ENCODE measurements at regions of chr20 and their contacts with region 1.

Region 1: DNA sequence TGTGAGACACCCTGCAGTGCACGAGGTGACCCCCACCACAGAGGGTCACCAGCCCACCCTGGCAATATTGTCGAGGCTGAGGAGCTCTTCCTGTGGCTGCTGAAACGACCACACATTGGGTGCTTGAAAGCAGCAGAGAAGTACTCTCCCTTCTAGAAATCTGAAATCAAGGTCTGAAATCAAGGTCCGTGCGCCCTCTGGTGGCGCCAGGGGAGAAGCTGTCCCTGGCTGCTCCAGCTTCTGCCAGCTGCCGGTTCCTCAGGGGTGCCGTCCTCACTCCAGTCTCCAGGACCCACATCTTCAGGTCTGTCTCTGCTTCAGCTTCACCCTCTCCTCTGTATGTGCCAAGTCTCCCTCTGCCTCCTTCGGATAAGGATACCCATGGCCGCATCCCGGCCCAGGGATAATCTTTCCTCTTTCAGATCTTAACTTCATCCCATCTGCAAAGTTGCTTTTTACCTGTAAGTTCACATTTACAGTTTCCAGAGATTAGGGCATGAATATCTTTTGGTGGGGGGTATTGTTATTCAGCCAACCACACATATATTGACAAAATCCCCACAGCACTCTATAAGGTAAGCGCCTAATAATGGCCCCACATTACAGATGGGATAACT is 108.3 kb upstream of the PHACTR3 start:
- DNase-seq: peak; percentile 41 to 71 (median 61)
- ATAC-seq: peak; percentile 77
- H3K4me3 ChIP-seq: no peak overlapping the region
- H3K4me3 Mint-ChIP-seq: no peak overlapping the region
- H3K27ac ChIP-seq: no peak overlapping the region
- H3K27ac Mint-ChIP-seq: no peak overlapping the region
- H3K4me1 ChIP-seq: no peaks in the 10 kb centered on the region
- H3K4me1 Mint-ChIP-seq: no peaks in the 10 kb centered on the region
- H3K27me3 ChIP-seq: no peaks in the 10 kb centered on the region
- H3K27me3 Mint-ChIP-seq: peaks cover 17 to 32% (median 25%) of the 10 kb centered on the region in 5 donors

Region 2: DNA sequence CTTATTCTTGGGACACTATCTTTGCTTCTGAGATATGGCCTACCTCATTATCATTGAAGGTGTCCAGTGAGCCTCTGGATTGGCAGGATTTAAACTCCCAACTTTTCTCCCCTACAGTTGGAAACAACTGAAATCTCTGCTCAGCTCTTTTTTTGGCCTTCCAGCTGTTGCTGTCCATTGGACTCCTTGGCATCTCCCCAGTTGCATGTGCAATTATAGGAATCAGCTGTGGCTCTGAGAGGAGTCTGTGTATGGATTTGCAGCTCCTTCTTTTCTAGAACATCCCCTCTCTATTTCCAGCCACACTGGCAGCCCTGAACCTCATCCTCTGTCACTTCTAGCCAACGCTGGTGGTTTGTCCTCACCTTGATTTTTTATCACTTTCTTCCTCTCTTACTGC is 1165.3 kb before region 1 on chr20:
- CTCF ChIA-PET with region 1: no interaction called
- POLR2A ChIA-PET with region 1: no interaction called
- intact Hi-C with region 1: no loop called
- DNase-seq: no peak
- ATAC-seq: no peak
- H3K4me3 ChIP-seq: no peak overlapping the region
- H3K4me3 Mint-ChIP-seq: no peak overlapping the region
- H3K27ac ChIP-seq: no peak overlapping the region
- H3K27ac Mint-ChIP-seq: peak overlapping the region in 1 of 9 donors; percentile 46
- H3K4me1 ChIP-seq: no peaks in the 10 kb centered on the region
- H3K4me1 Mint-ChIP-seq: peaks cover 17 to 68% (median 65%) of the 10 kb centered on the region in 7 donors
- H3K27me3 ChIP-seq: no peaks in the 10 kb centered on the region
- H3K27me3 Mint-ChIP-seq: no peaks in the 10 kb centered on the region

Region 3: DNA sequence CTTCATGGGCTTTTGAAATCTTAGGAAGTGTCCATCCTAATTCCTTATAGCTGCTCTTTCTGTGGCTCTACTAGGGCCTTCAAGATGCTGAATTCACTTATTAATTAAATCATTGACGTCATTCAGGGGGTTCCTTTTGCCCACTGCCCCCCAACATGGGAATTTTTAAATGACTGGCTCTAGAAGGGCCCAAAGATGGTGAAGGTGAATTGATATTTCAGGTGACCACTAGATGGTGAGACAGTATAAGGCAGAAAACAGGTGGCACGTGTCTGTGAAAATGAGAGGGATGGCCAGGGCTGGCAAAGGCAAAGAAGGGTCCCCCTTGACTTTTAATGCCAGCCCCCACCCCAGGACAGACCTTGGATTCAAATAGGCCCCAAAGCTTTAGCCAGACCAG is 631.7 kb before region 1 on chr20:
- CTCF ChIA-PET with region 1: interaction called, 10 read pairs
- POLR2A ChIA-PET with region 1: no interaction called
- intact Hi-C with region 1: loop called in 1 of 2 experiments (anchors 2 kb)
- DNase-seq: peak in 2 of 9 donors; percentile 37 to 39
- ATAC-seq: peak; percentile 45
- H3K4me3 ChIP-seq: no peak overlapping the region
- H3K4me3 Mint-ChIP-seq: no peak overlapping the region
- H3K27ac ChIP-seq: no peak overlapping the region
- H3K27ac Mint-ChIP-seq: no peak overlapping the region
- H3K4me1 ChIP-seq: no peaks in the 10 kb centered on the region
- H3K4me1 Mint-ChIP-seq: no peaks in the 10 kb centered on the region
- H3K27me3 ChIP-seq: peaks cover 0 to 3% of the 10 kb centered on the region in 2 donors
- H3K27me3 Mint-ChIP-seq: peaks cover 6 to 57% (median 16%) of the 10 kb centered on the region in 5 donors